ENCODE measurements at regions of chr19 and their contacts with region 1.

Region 1: DNA sequence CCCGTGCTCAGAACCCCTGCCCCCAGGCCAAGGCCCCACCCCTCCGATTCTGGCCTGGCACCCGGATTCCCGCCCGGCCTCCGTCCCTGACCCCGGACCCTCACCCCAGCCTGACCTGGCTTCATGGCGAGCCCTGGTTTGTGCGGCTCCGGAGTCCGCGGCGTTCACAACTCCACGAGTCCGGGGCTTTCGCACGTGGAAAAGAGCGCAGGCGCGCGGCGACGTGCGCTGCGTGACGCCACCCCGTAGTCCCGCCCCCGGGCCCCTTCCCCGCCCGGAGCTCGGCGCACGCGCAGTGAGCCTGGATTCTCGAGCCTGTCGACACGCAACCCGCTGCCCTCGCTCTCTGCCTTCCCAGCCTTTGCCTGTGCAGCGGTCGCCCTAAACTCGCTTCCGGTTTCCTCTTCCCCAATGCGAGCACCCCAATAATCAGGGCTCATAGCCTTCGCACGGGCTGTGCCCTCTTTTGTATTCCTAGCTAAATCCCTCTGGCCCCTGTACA is at the start of gene FBL:
- DNase-seq: peak; percentile 99
- CTCF ChIP-seq: no peak

Region 2: GRCh38 chr19:39524495-39524894 is 321.7 kb before region 1 on chr19:
- CTCF ChIA-PET with region 1: no interaction called
- POLR2A ChIA-PET with region 1: no interaction called
- DNase-seq: no peak
- CTCF ChIP-seq: no peak

Region 3: DNA sequence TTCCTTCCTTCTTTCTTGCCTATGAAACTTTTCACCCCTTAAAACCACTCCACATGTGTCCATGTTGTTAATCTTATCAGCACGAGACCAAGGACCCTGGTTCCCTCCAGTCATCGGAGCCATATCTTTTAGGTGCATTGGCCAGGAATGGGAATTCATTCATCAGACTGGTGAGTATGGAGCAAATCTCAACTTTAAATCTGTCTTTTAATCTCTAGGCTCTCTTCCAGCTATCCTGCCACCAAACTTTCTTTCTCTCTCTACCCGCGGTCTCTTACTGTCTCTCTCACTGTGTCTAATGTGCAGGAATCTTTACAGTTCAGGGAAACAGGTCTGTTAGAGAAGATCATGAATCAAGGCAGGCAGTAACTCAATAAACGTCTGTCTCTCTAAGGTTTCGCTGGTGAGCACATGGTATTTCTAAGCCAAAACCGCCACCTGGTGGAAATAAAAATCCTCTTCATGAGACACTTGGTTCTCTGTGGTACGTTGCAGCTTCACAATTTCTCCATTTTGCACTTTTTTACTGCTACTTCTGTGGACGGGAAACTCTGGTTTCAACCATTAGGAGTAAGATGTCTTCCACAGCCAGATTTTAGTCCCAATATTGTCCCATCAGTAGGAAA is 174.4 kb before region 1 on chr19:
- CTCF ChIA-PET with region 1: interaction called, 138 read pairs
- POLR2A ChIA-PET with region 1: interaction called, 3 read pairs
- DNase-seq: peak; percentile 35
- CTCF ChIP-seq: peak; percentile 54

Region 4: DNA sequence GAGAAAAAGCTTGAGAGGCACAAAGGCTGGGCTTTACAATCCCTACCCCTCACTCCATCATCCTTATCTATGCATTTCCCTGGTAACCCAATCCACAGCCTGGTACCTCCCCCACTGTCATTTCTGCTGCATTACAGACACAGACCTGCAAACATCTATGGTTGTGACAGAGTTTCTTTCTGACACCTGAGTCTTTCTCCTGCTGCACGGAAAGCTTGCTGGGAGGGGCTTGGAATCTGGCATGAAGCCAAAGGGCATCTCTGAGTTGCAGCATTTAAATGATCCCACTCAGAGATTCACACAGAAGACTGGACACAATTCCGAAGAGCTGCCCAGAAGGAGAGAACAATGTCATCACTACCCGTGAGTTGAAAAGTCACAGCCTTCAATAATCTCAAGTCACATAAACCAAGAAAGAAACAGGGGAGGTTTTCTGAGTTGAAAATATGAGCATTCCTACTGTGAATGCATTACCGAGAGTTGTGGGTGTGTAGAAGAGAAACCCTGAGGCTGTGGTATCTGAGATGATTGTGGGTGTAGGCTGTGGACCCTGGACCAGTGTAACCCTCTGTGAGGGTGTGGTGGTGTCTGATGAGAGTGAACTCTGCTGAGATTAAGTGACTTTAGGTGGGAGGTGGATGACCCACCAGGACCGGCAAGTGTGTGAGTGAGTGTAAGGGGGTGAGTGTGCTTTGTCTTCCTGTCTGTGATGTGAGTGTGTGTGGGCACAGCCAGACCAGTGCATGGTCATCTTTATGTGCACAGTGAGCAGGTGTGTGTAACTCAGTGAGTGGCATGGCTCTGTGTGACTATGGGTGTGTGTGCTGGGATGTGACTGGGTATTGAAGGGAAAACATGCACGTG is 141.8 kb before region 1 on chr19 and contains the start of gene LGALS14:
- CTCF ChIA-PET with region 1: interaction called, 15 read pairs
- POLR2A ChIA-PET with region 1: no interaction called
- DNase-seq: peak; percentile 31
- CTCF ChIP-seq: no peak

Region 5: GRCh38 chr19:39746836-39747529 is 99.2 kb before region 1 on chr19:
- CTCF ChIA-PET with region 1: no interaction called
- POLR2A ChIA-PET with region 1: no interaction called
- DNase-seq: no peak
- CTCF ChIP-seq: no peak

Region 6: DNA sequence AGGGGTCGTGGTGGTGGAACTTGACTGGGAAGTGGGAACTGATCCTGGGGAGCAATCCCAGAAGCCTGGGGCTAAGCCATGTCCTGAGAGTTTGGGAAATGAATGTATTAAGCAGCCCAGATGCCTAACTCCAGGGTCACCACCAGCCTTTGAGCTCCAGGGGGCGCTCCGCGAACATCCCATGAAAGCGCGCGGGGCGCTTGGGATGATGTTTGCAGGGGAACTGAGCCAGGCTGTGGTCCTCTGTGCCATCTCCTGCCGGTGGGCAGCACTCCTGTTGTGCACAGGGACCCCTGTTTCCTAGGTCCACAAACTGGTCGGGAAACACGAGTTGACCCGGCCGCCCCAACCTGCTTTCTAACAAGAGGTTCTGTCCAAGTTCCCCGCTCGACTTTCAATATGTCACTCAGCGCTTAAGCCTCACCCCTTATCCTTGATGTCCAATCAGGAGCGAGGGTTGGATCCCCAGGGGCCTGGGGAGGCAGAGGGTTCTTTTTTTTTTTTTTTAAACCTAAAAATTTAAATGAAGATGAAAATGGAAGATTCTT is 53.2 kb before region 1 on chr19:
- CTCF ChIA-PET with region 1: interaction called, 105 read pairs
- POLR2A ChIA-PET with region 1: no interaction called
- DNase-seq: peak; percentile 84
- CTCF ChIP-seq: peak; percentile 87

Region 7: GRCh38 chr19:39820696-39821095 is 25.5 kb before region 1 on chr19:
- CTCF ChIA-PET with region 1: interaction called, 22 read pairs
- POLR2A ChIA-PET with region 1: interaction called, 4 read pairs
- DNase-seq: no peak
- CTCF ChIP-seq: no peak

Region 8: DNA sequence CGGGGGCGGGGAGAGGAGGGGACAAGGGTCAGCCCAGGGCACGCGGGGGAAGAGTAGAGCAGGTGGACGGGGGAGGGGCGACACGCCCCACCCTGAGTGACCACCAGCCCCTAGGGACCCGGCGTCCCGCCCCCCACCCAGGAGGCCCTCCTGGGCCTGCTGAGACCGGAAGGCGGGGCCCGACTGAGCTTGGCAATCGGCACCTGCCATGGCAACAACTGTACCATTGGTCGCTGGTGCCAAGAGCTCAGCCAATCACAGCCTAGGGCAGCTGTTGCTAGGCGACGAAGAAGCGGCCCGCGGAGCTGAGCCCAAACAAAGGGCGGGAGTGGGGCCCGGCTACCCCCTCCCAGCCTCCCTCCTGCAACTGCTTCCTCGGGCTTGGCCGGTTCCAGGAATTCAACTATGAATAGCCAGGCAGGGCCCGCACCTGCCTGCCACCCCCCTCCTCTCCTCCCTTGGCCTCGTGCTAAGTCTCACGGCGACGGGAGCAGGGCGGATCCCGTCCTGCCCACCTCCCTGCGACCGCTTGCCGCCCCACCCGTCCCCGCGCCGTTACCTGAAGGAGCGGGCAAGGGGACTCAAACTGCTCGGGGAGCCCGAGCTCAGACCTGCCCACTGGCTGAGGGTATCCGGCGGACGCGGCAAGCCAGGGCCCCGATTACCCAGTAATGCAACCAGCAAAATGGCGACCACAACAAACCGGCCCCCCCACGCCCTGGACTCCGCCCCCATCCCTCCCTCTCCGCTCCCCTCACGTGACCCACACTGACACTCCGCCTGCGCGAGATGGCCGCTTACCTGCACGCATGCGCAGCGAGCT is 12.6 kb before region 1 on chr19 and contains the start of gene DYRK1B:
- CTCF ChIA-PET with region 1: interaction called, 31 read pairs
- POLR2A ChIA-PET with region 1: interaction called, 11 read pairs
- DNase-seq: peak; percentile 98
- CTCF ChIP-seq: no peak